Right ventricle myocardium inferior (tissue), 1 donor: ENCODE measurements at regions of chr19 and their contacts with region 1.

Region 1: GRCh38 chr19:51800473-51801244 is 5.7 kb downstream of the FPR3 start:
- DNase-seq: peak; percentile 88
- ATAC-seq: peak; percentile 78

Region 2: GRCh38 chr19:51703575-51704515 is 96.8 kb before region 1 on chr19:
- intact Hi-C with region 1: loop called (anchors 5 kb)
- DNase-seq: peak; percentile 99
- ATAC-seq: peak; percentile 95

Region 3: GRCh38 chr19:51777570-51778462 is 22.8 kb before region 1 on chr19:
- intact Hi-C with region 1: no loop called
- DNase-seq: peak; percentile 81
- ATAC-seq: peak; percentile 97